ENCODE measurements at regions of chr6 and their contacts with region 1.

Region 1: GRCh38 chr6:139060332-139060731 is 31.8 kb downstream of the ABRACL start:
- DNase-seq: peak; percentile 50
- H3K4me3 Mint-ChIP-seq: no peak overlapping the region
- H3K27ac Mint-ChIP-seq: no peak overlapping the region
- H3K4me1 Mint-ChIP-seq: peaks cover 17% of the 10 kb centered on the region
- H3K27me3 Mint-ChIP-seq: no peaks in the 10 kb centered on the region

Region 2: GRCh38 chr6:138824482-138825144 is 235.7 kb before region 1 on chr6:
- CTCF ChIA-PET with region 1: no interaction called
- intact Hi-C with region 1: no loop called
- DNase-seq: peak; percentile 53
- H3K4me3 Mint-ChIP-seq: no peak overlapping the region
- H3K27ac Mint-ChIP-seq: no peak overlapping the region
- H3K4me1 Mint-ChIP-seq: peaks cover 5% of the 10 kb centered on the region
- H3K27me3 Mint-ChIP-seq: no peaks in the 10 kb centered on the region

Region 3: DNA sequence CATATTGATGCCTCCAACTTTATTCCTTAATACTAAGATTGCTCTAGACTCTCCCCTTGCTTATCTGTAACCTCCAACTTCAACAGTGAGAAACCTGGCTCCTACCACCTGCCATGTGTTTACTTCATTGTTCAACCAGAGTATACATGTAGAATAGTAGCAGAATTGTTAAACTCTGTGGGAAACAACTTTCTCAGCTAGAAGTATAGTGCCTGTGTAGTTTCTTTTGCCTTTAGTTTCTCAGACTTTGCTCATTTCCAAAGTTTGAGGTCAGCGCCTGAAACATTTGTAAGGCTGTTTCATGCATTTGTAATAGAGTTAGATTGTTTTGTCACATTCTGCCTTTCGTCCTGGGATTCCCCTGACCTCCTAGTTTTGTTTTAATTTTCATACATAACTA is 39.7 kb after region 1 on chr6:
- CTCF ChIA-PET with region 1: no interaction called
- intact Hi-C with region 1: loop called (anchors 1 kb)
- DNase-seq: peak; percentile 63
- H3K4me3 Mint-ChIP-seq: no peak overlapping the region
- H3K27ac Mint-ChIP-seq: peak overlapping the region; percentile 66
- H3K4me1 Mint-ChIP-seq: peaks cover 26% of the 10 kb centered on the region
- H3K27me3 Mint-ChIP-seq: no peaks in the 10 kb centered on the region

Measured in activated naive CD4-positive, alpha-beta T cell treated with anti-CD3 and anti-CD28 coated beads for 36 hours (primary cell).